ENCODE measurements at regions of chr15 and their contacts with region 1.

Region 1: DNA sequence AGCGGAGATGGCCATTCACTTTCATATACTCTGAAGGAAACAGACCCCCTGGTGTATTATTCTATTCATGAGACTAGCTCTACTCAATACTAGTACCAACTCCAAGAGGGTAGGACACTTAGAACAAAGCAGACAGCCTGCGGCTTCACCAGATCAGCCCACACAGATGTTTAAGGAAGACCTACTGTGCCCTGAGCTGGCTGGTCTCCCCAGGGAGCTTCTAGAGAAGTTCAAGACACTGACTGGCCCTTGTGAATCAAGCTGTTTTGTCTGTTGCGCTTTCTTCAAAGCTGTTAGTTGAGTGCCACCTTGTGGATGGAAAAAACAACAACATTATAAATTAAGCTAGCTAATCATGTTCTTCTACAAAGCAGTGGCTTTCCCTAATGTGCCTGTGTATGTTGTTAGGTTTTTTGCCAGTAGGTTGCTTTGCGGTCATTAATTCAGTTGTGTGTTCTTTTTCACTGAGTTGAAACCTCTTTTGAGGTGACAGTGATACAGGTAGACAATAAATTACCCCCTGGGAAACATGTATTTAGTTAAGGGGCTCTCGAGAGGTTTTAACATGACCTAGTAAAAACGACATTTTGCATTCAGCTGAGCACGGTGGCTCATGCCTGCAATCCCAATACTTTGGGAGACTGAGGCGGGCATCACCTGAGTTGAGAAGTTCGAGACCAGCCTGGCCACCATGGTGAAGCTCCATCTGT is 64.2 kb upstream of the MYZAP start:
- DNase-seq: peak; percentile 28 to 57
- H3K4me3 ChIP-seq: no peak overlapping the region
- H3K27ac ChIP-seq: no peak overlapping the region
- H3K4me1 ChIP-seq: no peaks in the 10 kb centered on the region
- H3K27me3 ChIP-seq: no peaks in the 10 kb centered on the region
- CTCF ChIP-seq: peak; percentile 77

Region 2: GRCh38 chr15:56491110-56491722 is 1036.3 kb before region 1 on chr15:
- CTCF ChIA-PET with region 1: interaction called, 4 read pairs
- POLR2A ChIA-PET with region 1: no interaction called
- intact Hi-C with region 1: loop called (anchors 5 kb)
- DNase-seq: peak; percentile 48 to 50
- H3K4me3 ChIP-seq: no peak overlapping the region
- H3K27ac ChIP-seq: no peak overlapping the region
- H3K4me1 ChIP-seq: no peaks in the 10 kb centered on the region; the same call in 1 of the 2 replicates
- H3K27me3 ChIP-seq: no peaks in the 10 kb centered on the region
- CTCF ChIP-seq: peak; percentile 78

Region 3: GRCh38 chr15:57069423-57069822 is 458.1 kb before region 1 on chr15:
- CTCF ChIA-PET with region 1: interaction called, 13 read pairs
- POLR2A ChIA-PET with region 1: no interaction called
- intact Hi-C with region 1: no loop called
- DNase-seq: no peak
- H3K4me3 ChIP-seq: no peak overlapping the region
- H3K27ac ChIP-seq: no peak overlapping the region
- H3K4me1 ChIP-seq: no peaks in the 10 kb centered on the region
- H3K27me3 ChIP-seq: no peaks in the 10 kb centered on the region
- CTCF ChIP-seq: no peak

Region 4: GRCh38 chr15:57340682-57341259 is 186.8 kb before region 1 on chr15:
- CTCF ChIA-PET with region 1: interaction called, 31 read pairs
- POLR2A ChIA-PET with region 1: interaction called, 6 read pairs
- intact Hi-C with region 1: loop called (anchors 1 kb)
- DNase-seq: peak; percentile 46 to 50
- H3K4me3 ChIP-seq: no peak overlapping the region
- H3K27ac ChIP-seq: no peak overlapping the region
- H3K4me1 ChIP-seq: no peaks in the 10 kb centered on the region
- H3K27me3 ChIP-seq: no peaks in the 10 kb centered on the region
- CTCF ChIP-seq: peak; percentile 87

Region 5: DNA sequence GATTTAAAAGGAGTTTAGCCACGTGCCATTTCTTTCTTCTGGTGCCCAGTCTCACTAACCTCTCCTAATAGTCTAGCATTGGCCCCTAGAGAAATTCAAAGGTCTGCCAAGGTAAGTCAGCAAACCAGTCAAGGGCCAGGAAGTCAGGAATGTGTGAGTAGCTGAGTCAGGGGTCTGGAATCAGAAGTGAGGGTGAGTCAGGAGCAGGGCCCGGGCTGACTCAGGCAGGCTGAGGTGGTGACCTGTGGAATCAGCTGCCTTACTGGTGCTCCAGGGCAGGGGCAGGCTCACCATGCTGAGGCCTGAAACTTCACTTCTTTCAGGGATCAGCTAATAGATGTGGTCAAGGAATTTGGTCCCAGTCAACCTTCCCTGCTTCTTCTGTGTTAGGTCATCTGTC is 41.7 kb before region 1 on chr15:
- CTCF ChIA-PET with region 1: no interaction called
- POLR2A ChIA-PET with region 1: no interaction called
- intact Hi-C with region 1: loop called (anchors 1 kb)
- DNase-seq: peak; percentile 85 to 93
- H3K4me3 ChIP-seq: no peak overlapping the region
- H3K27ac ChIP-seq: peak overlapping the region; percentile 45
- H3K4me1 ChIP-seq: peaks cover 20% of the 10 kb centered on the region
- H3K27me3 ChIP-seq: no peaks in the 10 kb centered on the region
- CTCF ChIP-seq: no peak

Measured in PC-9 (cell line).